Left ventricle myocardium inferior (tissue), 1 donor: ENCODE measurements at regions of chr18 and their contacts with region 1.

Region 1: GRCh38 chr18:24488824-24489493 is 28.5 kb downstream of the HRH4 start:
- DNase-seq: no peak
- H3K4me3 ChIP-seq: no peak overlapping the region
- H3K27ac ChIP-seq: no peak overlapping the region
- H3K4me1 ChIP-seq: no peaks in the 10 kb centered on the region
- H3K27me3 ChIP-seq: peaks cover 4% of the 10 kb centered on the region
- CTCF ChIP-seq: peak; percentile 86

Region 2: GRCh38 chr18:24342347-24342746 is 146.6 kb before region 1 on chr18:
- intact Hi-C with region 1: no loop called
- DNase-seq: no peak
- H3K4me3 ChIP-seq: no peak overlapping the region
- H3K27ac ChIP-seq: no peak overlapping the region
- H3K4me1 ChIP-seq: no peaks in the 10 kb centered on the region
- H3K27me3 ChIP-seq: no peaks in the 10 kb centered on the region
- CTCF ChIP-seq: no peak

Region 3: DNA sequence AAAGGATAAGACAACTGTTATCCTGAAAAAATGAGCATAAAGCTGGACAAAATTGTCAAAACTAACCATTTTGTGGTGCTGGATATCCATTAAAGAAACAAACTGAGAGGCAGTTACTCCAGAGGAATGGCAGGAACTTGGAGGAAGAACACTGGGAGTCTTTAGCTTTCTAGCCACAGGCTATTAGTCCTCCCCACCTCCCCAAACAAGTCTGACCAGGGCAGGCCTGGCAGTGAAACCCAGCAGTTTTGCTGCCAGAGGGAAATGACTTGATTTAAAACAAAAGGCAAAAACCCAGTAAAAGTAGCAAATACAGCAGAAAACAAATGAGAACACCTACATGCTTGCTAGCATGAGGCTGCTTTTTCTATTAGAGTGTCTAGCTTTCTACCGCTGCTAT is 126.2 kb before region 1 on chr18:
- intact Hi-C with region 1: loop called (anchors 5 kb)
- DNase-seq: no peak
- H3K4me3 ChIP-seq: no peak overlapping the region
- H3K27ac ChIP-seq: no peak overlapping the region
- H3K4me1 ChIP-seq: peaks cover 4% of the 10 kb centered on the region
- H3K27me3 ChIP-seq: no peaks in the 10 kb centered on the region
- CTCF ChIP-seq: no peak

Region 4: DNA sequence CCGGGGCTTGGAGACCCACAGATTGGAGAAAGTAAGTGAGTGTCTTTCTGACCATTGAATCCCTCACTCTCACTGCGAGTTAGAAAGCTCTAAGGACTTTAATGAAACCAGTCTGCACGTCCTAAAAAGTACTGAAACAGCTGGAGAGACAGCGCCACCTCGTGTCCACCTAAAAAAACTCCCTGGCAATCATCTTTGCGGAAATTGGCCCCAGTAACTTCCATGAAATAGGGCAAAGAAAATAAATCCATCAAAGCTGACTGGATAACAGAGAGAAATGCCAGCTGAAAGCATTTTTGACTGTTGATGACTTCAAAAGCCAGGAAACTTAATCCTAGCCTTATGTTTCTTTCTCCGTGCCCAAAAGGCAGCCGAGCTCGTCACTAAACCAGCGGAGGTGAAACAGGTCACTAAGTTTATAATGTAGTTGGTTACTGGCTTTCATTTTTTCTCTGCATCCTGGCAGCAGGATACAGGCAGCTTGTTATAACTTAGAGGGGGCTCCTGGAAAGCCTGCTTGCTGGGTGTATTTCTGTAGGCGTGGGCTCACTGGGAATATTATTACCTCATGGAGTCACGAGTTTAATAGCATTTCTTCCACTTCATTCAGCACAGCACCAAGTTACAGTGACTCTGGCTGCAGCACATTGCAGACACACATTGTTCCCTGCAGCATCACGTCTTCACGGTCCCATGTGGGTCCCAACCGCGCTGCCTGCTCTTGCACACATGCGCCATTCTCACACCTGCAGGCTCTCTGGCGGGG is 238.0 kb after region 1 on chr18:
- intact Hi-C with region 1: loop called (anchors 5 kb)
- DNase-seq: peak; percentile 42
- H3K4me3 ChIP-seq: peak overlapping the region; percentile 41
- H3K27ac ChIP-seq: no peak overlapping the region
- H3K4me1 ChIP-seq: peaks cover 5% of the 10 kb centered on the region
- H3K27me3 ChIP-seq: peaks cover 24% of the 10 kb centered on the region
- CTCF ChIP-seq: peak; percentile 85